ENCODE measurements at regions of chr1 and their contacts with region 1.

Region 1: GRCh38 chr1:50981741-50982140 is 11.7 kb downstream of the CDKN2C start:
- DNase-seq: no peak
- H3K4me3 ChIP-seq: no peak overlapping the region
- CTCF ChIP-seq: no peak
- POLR2A ChIP-seq: no peak

Region 2: GRCh38 chr1:51564124-51564523 is 582.4 kb after region 1 on chr1:
- intact Hi-C with region 1: loop called (anchors 5 kb)
- DNase-seq: no peak
- H3K4me3 ChIP-seq: no peak overlapping the region
- CTCF ChIP-seq: no peak
- POLR2A ChIP-seq: no peak